Activated CD4-positive, alpha-beta memory T cell treated with anti-CD3 and anti-CD28 coated beads for 36 hours (primary cell): ENCODE measurements at regions of chr3 and their contacts with region 1.

Region 1: DNA sequence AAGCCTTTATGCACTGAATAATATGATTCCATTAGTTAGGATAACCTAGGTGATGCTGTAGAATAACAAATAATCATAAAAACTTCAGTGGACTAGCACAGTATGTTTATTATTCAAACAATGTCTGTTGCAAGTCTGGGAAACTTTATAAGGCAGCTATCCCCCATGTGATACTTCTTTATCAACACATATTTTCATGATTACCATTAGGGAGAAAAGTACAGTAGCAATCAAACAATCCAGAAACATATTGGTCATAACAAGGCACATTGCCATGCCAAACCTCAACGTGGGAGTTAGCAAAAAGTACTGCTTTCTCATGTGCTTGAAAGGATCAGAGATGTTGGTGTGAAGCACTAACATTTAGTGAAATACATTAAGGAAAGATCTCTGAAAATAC is 35.5 kb downstream of the EOMES start:
- DNase-seq: no peak
- H3K4me3 Mint-ChIP-seq: no peak overlapping the region
- H3K27ac Mint-ChIP-seq: no peak overlapping the region
- H3K4me1 Mint-ChIP-seq: no peaks in the 10 kb centered on the region
- H3K27me3 Mint-ChIP-seq: no peaks in the 10 kb centered on the region

Region 2: DNA sequence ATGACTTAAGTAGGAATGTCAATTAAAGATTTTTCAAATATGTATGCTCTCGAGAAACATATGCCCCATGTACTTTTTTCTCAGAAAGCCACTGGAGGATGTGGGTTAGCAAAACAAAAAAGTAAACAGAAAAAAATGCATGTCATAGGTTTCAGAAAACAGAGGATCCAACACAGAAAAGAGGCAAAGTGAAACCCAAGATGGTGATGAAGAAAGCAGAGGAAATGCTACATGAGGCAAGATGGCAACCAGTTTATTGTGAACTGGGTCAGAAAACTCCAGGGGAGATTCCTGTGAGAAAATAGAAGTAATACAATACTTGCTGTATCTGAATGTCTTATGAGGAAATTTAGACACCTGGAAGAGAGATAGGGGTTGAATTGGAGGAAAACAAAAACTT is 66.3 kb after region 1 on chr3:
- CTCF ChIA-PET with region 1: no interaction called
- POLR2A ChIA-PET with region 1: no interaction called
- intact Hi-C with region 1: loop called (anchors 2 kb)
- DNase-seq: no peak
- H3K4me3 Mint-ChIP-seq: no peak overlapping the region
- H3K27ac Mint-ChIP-seq: no peak overlapping the region
- H3K4me1 Mint-ChIP-seq: peaks cover 15% of the 10 kb centered on the region
- H3K27me3 Mint-ChIP-seq: no peaks in the 10 kb centered on the region